HAP-1 (cell line): ENCODE measurements at regions of chr7 and their contacts with region 1.

Region 1: GRCh38 chr7:51141451-51142003 is 175.1 kb downstream of the COBL start:
- DNase-seq: peak; percentile 20 to 28
- H3K4me3 ChIP-seq: no peak overlapping the region
- H3K4me1 ChIP-seq: no peaks in the 10 kb centered on the region
- H3K27me3 ChIP-seq: no peaks in the 10 kb centered on the region

Region 2: GRCh38 chr7:50119815-50120637 is 1021.5 kb before region 1 on chr7:
- in situ Hi-C with region 1: loop called (anchors 25 kb)
- DNase-seq: peak in 1 of 2 experiments; percentile 16
- H3K4me3 ChIP-seq: no peak overlapping the region
- H3K4me1 ChIP-seq: no peaks in the 10 kb centered on the region
- H3K27me3 ChIP-seq: no peaks in the 10 kb centered on the region; the same call in 1 of the 2 replicates

Region 3: DNA sequence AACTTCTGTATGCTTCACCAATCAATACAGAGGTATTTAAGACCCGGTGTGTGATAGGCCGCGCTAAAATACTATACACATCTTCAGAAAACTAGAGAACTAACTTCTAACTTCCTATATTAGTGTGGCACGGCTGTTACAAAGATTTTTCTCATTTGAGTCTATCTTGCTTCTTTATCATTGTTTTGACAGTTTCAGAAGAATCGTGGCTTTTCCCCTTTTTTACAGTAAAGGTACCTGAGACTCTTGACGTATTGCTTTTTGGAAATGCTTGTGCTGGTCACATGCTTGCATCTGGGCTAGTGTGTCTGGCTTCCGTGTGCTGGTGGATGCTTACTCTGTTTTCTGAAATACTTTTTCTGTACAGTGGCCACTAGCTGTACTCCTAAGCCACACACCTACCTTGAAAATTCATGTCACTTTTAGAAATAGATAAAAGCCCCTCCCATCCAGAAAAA is 824.3 kb before region 1 on chr7:
- in situ Hi-C with region 1: no loop called
- DNase-seq: no peak
- H3K4me3 ChIP-seq: no peak overlapping the region
- H3K4me1 ChIP-seq: no peaks in the 10 kb centered on the region
- H3K27me3 ChIP-seq: peaks cover 8% of the 10 kb centered on the region

Region 4: GRCh38 chr7:50467817-50468610 is 673.5 kb before region 1 on chr7:
- in situ Hi-C with region 1: loop called (anchors 10 kb)
- DNase-seq: peak; percentile 69 to 87
- H3K4me3 ChIP-seq: no peak overlapping the region
- H3K4me1 ChIP-seq: peaks cover 4% of the 10 kb centered on the region
- H3K27me3 ChIP-seq: no peaks in the 10 kb centered on the region

Region 5: GRCh38 chr7:50761713-50762112 is 379.8 kb before region 1 on chr7:
- in situ Hi-C with region 1: no loop called
- DNase-seq: no peak
- H3K4me3 ChIP-seq: no peak overlapping the region
- H3K4me1 ChIP-seq: no peaks in the 10 kb centered on the region
- H3K27me3 ChIP-seq: no peaks in the 10 kb centered on the region